Activated T-helper 1 cell treated with anti-CD3 and anti-CD28 coated beads, Interleukin-12 subunit alpha, Interleukin-12 subunit beta, Interleukin-2, Interleukin-4 antibody, amounts not matched to agents 30 ng/mL and 10 ng/mL and 1 ng/mL, durations not matched to agents 14 hours and 24 hours and 36 hours (primary cell): ENCODE measurements at regions of chr11 and their contacts with region 1.

Region 1: DNA sequence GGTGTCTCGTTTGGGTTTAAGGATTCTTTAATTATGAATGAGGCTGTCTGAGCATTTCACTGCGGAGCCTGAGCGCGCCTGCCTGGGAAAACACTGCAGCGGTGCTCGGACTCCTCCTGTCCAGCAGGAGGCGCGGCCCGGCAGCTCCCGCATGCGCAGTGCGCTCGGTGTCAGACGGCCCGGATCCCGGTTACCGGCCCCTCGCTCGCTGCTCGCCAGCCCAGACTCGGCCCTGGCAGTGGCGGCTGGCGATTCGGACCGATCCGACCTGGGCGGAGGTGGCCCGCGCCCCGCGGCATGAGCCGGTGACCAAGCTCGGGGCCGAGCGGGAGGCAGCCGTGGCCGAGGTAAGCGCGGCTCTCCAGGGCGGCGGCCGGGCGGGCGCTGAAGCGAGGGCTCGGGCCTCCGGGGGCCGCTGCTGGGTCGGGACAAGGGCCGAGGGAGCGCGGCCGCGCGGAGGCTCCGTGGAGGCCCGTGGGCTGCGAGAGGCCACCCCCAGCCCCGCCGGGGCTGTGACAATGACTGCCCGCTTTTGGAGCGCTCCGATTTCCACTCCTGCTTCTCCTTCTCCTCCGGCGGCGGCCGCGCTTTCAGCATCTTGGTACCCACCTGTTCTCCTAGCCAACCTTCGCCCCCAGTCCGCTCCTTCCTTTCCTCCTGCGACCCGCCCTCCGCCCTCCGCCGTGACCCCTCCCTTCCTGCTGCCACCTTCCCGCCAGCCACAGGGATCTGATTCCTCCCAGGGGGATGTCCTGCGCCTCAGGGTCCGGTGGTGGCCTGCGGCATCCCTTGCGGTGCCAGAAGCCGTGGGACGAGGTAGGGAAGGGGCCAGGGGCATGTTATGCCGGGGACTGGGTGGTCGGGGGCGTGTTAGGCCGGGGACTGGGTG is at the start of gene EXT2:
- DNase-seq: peak; percentile 82
- H3K4me3 Mint-ChIP-seq: peak within 1 kb of the TSS; percentile 87
- H3K27ac Mint-ChIP-seq: peak within 1 kb of the TSS; percentile 50
- H3K4me1 Mint-ChIP-seq: peaks cover 30% of the 10 kb centered on the region
- H3K27me3 Mint-ChIP-seq: no peaks in the 10 kb centered on the region
- total RNA-seq, gene EXT2: 31.0 and 35.6 TPM in 2 replicates

Region 2: GRCh38 chr11:43341159-43341558 is 754.6 kb before region 1 on chr11:
- intact Hi-C with region 1: no loop called
- DNase-seq: no peak
- H3K4me3 Mint-ChIP-seq: no peak overlapping the region
- H3K27ac Mint-ChIP-seq: no peak overlapping the region
- H3K4me1 Mint-ChIP-seq: no peaks in the 10 kb centered on the region
- H3K27me3 Mint-ChIP-seq: no peaks in the 10 kb centered on the region

Region 3: GRCh38 chr11:43895601-43896000 is 200.1 kb before region 1 on chr11:
- intact Hi-C with region 1: loop called (anchors 1 kb)
- DNase-seq: no peak
- H3K4me3 Mint-ChIP-seq: no peak overlapping the region
- H3K27ac Mint-ChIP-seq: no peak overlapping the region
- H3K4me1 Mint-ChIP-seq: no peaks in the 10 kb centered on the region
- H3K27me3 Mint-ChIP-seq: no peaks in the 10 kb centered on the region

Region 4: DNA sequence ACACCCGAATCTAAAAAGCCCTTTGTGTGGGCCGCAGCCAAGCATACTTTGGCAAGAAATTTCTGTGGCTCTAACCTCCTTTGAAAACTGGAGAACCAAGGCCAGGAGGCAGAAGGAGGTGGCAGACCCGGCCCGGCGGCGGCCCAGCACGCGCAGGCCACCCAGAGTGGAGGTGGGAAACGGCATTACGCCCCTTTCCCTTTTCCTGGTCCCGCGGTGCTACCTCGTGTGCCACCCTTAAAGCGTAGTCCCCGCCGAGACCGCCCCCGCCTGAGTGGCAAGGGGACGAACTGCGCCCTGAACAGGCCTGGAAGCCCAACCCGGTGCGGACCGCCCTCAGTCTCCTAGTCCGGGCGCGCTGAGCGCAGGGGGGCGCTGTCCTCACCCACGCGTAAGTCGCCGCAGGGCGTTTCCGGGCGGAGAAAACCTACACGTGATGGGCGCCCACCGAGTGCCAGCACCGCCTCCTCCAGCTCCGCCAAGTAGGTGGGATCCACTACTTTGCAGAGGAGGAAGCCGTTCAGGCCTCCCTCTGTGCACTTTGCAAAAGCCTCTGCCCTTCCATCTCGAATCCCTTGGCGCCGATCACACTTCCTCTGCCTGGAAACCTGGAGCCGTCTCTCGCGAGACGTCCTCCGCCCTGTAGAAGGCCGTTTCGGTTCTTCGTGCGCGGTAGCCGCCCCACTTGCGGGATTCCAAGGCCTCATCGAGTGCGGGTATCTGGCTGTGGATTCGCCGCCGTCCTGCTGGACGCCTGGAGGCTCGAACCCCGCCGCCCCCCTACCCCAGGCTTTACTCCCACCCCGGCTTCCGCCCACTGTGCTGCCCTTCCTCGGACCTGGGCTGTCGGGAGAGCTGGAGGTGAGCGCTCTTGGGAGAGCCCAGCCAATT is 29.7 kb before region 1 on chr11 and contains the start of gene ACCS:
- intact Hi-C with region 1: loop called (anchors 1 kb)
- DNase-seq: peak; percentile 83
- H3K4me3 Mint-ChIP-seq: peak within 1 kb of the TSS; percentile 91
- H3K27ac Mint-ChIP-seq: peak within 1 kb of the TSS; percentile 94
- H3K4me1 Mint-ChIP-seq: peaks cover 29% of the 10 kb centered on the region
- H3K27me3 Mint-ChIP-seq: peaks cover 4% of the 10 kb centered on the region
- total RNA-seq, gene ACCS: 14.7 and 18.1 TPM in 2 replicates

Region 5: DNA sequence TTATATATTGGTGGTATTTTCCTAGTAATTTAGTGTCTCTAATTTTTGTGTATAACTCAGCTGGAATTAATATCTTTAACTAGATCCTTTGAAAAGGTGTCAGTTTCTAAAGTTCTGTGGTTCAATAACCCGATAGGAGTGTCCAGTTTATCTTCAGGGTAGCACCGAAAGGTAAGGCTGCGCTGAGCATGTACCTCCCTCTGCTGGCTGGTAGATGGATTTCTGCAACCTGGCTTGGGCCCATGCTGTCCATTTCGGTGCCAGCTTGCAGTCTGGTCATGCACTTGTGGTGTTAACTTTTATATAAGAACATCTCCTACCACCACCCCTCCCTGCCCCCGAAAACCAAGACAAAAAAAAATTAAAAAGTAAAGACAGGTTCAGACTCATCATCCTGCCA is 24.4 kb after region 1 on chr11:
- intact Hi-C with region 1: no loop called
- DNase-seq: no peak
- H3K4me3 Mint-ChIP-seq: no peak overlapping the region
- H3K27ac Mint-ChIP-seq: no peak overlapping the region
- H3K4me1 Mint-ChIP-seq: no peaks in the 10 kb centered on the region
- H3K27me3 Mint-ChIP-seq: no peaks in the 10 kb centered on the region

Region 6: GRCh38 chr11:44530413-44531115 is 434.8 kb after region 1 on chr11:
- intact Hi-C with region 1: loop called (anchors 2 kb)
- DNase-seq: peak; percentile 58
- H3K4me3 Mint-ChIP-seq: peak overlapping the region; percentile 68
- H3K27ac Mint-ChIP-seq: peak overlapping the region; percentile 89
- H3K4me1 Mint-ChIP-seq: peaks cover 40% of the 10 kb centered on the region
- H3K27me3 Mint-ChIP-seq: no peaks in the 10 kb centered on the region

Region 7: DNA sequence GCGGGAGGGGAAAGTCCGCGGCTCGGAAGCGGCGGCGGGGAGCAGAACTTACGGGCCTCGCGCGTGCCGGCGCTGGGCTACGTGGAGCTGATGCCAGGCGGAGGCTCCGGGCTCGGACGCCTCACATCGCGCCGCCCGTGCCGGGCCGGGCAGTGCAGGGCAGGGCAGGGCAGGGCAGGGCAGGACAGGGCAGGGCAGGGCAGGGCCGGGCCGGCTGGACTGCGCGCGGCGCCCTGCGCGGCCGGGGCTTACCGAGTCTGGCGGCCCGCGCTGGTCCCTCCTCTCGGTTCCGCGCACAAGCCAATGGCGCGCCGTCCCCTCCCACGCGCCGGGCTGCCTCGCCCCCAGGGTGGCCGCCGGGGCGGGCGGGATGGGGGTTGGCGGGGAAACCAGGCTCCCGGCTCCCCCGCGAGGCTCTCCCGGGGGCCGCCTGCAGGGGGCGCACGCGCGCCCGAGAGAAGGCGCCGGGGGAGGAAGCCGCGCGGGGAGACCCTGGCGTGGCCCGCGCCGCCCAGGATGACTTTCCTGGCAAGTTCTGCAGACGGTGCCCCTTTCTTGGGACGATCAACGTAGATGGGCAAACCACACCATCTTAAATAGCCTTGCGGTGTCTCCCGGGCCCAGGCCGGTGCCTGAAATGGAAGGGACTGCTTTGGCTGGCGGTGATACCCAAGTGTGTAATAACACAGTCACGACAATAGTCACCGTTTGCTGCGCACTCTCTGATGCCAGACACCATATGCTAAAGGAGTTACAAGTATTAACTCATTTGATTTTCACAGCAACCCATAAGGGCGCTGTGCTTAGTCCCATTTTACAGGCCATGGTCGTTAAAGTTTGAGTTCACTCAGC is 855.1 kb after region 1 on chr11 and contains the start of gene TP53I11:
- intact Hi-C with region 1: loop called (anchors 10 kb)
- DNase-seq: peak; percentile 47
- H3K4me3 Mint-ChIP-seq: peak within 1 kb of the TSS; percentile 62
- H3K27ac Mint-ChIP-seq: no peak within 1 kb of the TSS
- H3K4me1 Mint-ChIP-seq: peaks cover 14% of the 10 kb centered on the region
- H3K27me3 Mint-ChIP-seq: peaks cover 25% of the 10 kb centered on the region
- total RNA-seq, gene TP53I11: 5.7 TPM in 2 replicates